Activated CD4-positive, alpha-beta T cell treated with anti-CD3 and anti-CD28 coated beads for 36 hours (primary cell): ENCODE measurements at regions of chr17 and their contacts with region 1.

Region 1: GRCh38 chr17:75319904-75320691 is 30.9 kb upstream of the SLC25A19 start:
- DNase-seq: no peak
- ATAC-seq: no peak
- H3K4me3 Mint-ChIP-seq: no peak overlapping the region
- H3K27ac Mint-ChIP-seq: no peak overlapping the region
- H3K4me1 Mint-ChIP-seq: peaks cover 21% of the 10 kb centered on the region
- H3K27me3 Mint-ChIP-seq: no peaks in the 10 kb centered on the region

Region 2: DNA sequence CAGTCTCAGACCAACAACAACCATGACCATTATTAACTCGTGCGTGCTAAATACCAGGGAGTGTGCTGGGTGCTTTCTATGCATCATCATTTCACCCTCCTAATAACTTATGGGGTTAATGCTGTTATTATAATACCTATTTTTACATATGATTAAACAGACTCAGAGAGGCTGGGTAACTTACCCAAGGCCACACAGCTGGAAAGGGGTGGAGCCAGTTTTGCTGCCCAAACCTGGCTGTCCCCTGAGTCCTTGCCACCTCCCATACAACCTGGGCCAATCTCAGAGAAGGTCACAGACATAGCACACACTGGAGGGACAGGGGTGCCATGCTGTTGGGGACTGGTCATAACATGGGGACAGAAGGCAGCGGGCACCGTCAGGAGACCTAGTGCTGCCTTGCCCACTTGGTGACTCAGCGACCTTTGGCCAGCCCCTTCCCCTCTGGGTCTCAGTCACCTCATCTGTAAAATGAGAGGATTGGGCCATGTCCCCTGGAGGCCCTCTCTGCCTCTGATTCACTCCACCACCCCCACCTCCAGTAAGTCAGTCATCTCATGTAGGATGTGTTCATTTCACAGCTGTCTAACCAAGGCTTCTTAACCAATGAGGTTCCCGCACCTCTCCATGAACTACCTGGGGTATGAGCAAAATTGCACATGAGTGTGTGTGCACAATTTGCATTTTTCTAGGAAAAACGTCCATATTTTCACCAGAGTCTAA is 415.2 kb before region 1 on chr17:
- CTCF ChIA-PET with region 1: no interaction called
- POLR2A ChIA-PET with region 1: no interaction called
- intact Hi-C with region 1: no loop called
- DNase-seq: peak; percentile 45
- ATAC-seq: peak; percentile 80
- H3K4me3 Mint-ChIP-seq: no peak overlapping the region
- H3K27ac Mint-ChIP-seq: no peak overlapping the region
- H3K4me1 Mint-ChIP-seq: peaks cover 5% of the 10 kb centered on the region
- H3K27me3 Mint-ChIP-seq: peaks cover 9% of the 10 kb centered on the region

Region 3: GRCh38 chr17:75331671-75332070 is 11.6 kb after region 1 on chr17:
- CTCF ChIA-PET with region 1: interaction called, 24 read pairs
- POLR2A ChIA-PET with region 1: no interaction called
- intact Hi-C with region 1: no loop called
- DNase-seq: no peak
- ATAC-seq: no peak
- H3K4me3 Mint-ChIP-seq: no peak overlapping the region
- H3K27ac Mint-ChIP-seq: peak overlapping the region; percentile 31
- H3K4me1 Mint-ChIP-seq: peaks cover 60% of the 10 kb centered on the region
- H3K27me3 Mint-ChIP-seq: no peaks in the 10 kb centered on the region

Region 4: GRCh38 chr17:75345514-75346167 is 25.5 kb after region 1 on chr17:
- CTCF ChIA-PET with region 1: interaction called, 13 read pairs
- POLR2A ChIA-PET with region 1: no interaction called
- intact Hi-C with region 1: loop called in 1 of 2 experiments (anchors 2 kb)
- DNase-seq: peak; percentile 74
- ATAC-seq: peak; percentile 58
- H3K4me3 Mint-ChIP-seq: peak overlapping the region; percentile 60
- H3K27ac Mint-ChIP-seq: peak overlapping the region; percentile 90
- H3K4me1 Mint-ChIP-seq: peaks cover 97% of the 10 kb centered on the region
- H3K27me3 Mint-ChIP-seq: no peaks in the 10 kb centered on the region

Region 5: DNA sequence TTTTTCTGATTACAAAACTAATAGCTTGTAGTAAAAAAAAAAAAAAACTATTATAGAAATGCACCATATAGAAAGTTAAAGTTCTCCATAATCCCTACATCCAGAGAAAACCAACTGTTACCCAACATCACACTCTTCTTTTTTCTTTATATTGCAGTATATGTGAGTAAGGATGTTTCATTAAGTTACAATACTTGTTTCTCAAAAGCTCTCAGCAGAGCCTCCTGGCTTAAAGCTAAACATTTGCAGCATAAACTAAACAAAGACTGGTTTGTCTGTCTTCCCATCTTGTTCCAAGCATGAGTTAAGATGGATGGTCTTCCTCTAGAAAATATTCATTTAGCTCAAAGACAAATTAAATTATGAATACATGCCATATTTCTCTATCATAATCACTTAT is 60.2 kb after region 1 on chr17:
- CTCF ChIA-PET with region 1: interaction called, 13 read pairs
- POLR2A ChIA-PET with region 1: no interaction called
- intact Hi-C with region 1: no loop called
- DNase-seq: no peak
- ATAC-seq: no peak
- H3K4me3 Mint-ChIP-seq: no peak overlapping the region
- H3K27ac Mint-ChIP-seq: peak overlapping the region; percentile 65
- H3K4me1 Mint-ChIP-seq: peaks cover 47% of the 10 kb centered on the region
- H3K27me3 Mint-ChIP-seq: no peaks in the 10 kb centered on the region

Region 6: GRCh38 chr17:75412455-75413317 is 92.6 kb after region 1 on chr17:
- CTCF ChIA-PET with region 1: interaction called, 19 read pairs
- POLR2A ChIA-PET with region 1: interaction called, 6 read pairs
- intact Hi-C with region 1: loop called (anchors 1 to 2 kb)
- DNase-seq: peak; percentile 84
- ATAC-seq: peak; percentile 85
- H3K4me3 Mint-ChIP-seq: peak overlapping the region; percentile 44
- H3K27ac Mint-ChIP-seq: peak overlapping the region; percentile 3
- H3K4me1 Mint-ChIP-seq: peaks cover 15% of the 10 kb centered on the region
- H3K27me3 Mint-ChIP-seq: no peaks in the 10 kb centered on the region